RWPE1 (cell line): ENCODE measurements at regions of chr2 and their contacts with region 1.

Region 1: DNA sequence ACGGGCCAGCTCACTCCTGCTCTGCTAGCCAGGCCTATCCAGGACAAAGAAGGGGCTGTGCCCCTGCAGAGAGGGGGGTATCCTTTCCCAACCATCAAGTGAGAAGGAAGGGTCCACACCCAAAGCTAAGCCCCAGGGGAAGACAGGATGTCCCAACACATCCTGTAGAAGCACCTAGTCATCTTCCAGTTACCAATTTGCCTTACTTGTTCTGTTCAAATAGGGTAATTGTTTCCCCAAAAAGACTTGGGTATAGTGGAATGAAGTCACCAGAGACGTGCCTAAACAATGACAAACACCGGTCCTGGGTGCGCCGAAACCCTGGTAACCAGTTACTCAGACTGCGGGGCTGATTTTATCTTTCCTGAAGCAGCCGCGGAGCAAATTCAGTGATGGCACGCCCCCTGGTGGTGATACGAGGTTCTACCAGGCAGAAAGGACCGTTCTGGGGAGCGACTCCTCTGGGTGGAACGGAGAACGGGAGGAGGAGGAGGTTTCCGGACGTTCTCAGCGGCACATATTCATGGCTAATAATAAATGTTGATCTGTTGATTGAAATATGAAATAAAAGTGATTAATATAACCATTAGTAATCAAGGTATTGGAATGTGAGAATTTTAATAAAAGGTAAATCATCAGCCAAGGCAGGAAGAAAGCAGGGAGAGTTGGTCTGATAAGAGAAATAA is 109.3 kb upstream of the STON1 start:
- DNase-seq: peak; percentile 88
- H3K27ac ChIP-seq: peak overlapping the region; percentile 87
- CTCF ChIP-seq: peak; percentile 95

Region 2: GRCh38 chr2:48126162-48126561 is 294.5 kb before region 1 on chr2:
- CTCF ChIA-PET with region 1: interaction called, 11 read pairs
- POLR2A ChIA-PET with region 1: no interaction called
- DNase-seq: no peak
- H3K27ac ChIP-seq: no peak overlapping the region
- CTCF ChIP-seq: no peak

Region 3: GRCh38 chr2:48132271-48132625 is 288.4 kb before region 1 on chr2:
- CTCF ChIA-PET with region 1: no interaction called
- POLR2A ChIA-PET with region 1: interaction called, 11 read pairs
- DNase-seq: no peak
- H3K27ac ChIP-seq: no peak overlapping the region
- CTCF ChIP-seq: no peak

Region 4: GRCh38 chr2:48295421-48295820 is 125.2 kb before region 1 on chr2:
- CTCF ChIA-PET with region 1: no interaction called
- POLR2A ChIA-PET with region 1: no interaction called
- DNase-seq: no peak
- H3K27ac ChIP-seq: no peak overlapping the region
- CTCF ChIP-seq: no peak

Region 5: GRCh38 chr2:48607307-48608014 is 186.8 kb after region 1 on chr2:
- CTCF ChIA-PET with region 1: no interaction called
- POLR2A ChIA-PET with region 1: no interaction called
- DNase-seq: no peak
- H3K27ac ChIP-seq: no peak overlapping the region
- CTCF ChIP-seq: no peak